ENCODE measurements at regions of chr5 and their contacts with region 1.

Region 1: DNA sequence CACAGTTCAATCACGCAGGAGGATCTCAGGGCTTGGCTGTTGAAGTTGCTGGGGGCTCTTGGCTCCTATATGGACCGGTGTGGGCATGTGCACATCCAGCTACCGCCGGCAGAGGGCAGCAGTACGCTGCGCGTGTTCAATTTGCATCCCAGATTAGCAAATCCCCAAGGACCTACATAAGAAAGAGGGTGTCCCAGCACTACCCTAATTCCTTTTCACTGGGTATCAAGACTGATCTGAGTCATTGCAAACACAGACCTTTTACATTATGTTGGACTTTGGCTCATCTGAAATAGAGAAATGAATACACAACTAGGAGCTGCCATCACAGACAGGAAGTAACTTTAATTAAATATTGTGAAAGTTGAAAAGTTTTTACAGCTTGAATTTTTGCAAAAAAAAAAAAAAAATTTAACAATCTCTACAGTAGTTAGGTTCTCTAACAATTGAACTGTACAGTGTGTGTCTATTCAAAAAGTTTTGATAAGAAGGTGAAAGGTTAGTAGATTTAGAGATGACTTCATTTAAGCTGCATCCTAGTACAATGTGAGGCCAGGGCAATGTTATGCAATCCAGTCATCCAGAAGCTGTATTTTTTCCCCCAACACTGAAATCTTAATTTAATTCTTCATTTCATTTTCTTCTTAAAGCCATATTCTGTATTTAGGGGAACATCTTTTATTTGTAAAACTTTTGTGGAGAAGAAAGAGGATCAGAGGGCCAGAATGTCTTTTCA is 404.0 kb downstream of the EBF1 start:
- DNase-seq: peak; percentile 60
- ATAC-seq: peak; percentile 95
- H3K4me3 ChIP-seq: no peak overlapping the region
- H3K27ac ChIP-seq: no peak overlapping the region
- H3K4me1 ChIP-seq: no peaks in the 10 kb centered on the region
- H3K27me3 ChIP-seq: peaks cover 2% of the 10 kb centered on the region; the same call in 1 of the 2 replicates
- CTCF ChIP-seq: peak; percentile 90
- POLR2A ChIP-seq: no peak
- RAD21 ChIP-seq: peak; percentile 89

Region 2: GRCh38 chr5:158074992-158075769 is 620.6 kb before region 1 on chr5:
- CTCF ChIA-PET with region 1: interaction called, 4 read pairs
- POLR2A ChIA-PET with region 1: no interaction called
- dilution Hi-C with region 1: no loop called
- in situ Hi-C with region 1: no loop called
- intact Hi-C with region 1: loop called (anchors 1 kb)
- DNase-seq: peak; percentile 61
- ATAC-seq: peak; percentile 98
- H3K4me3 ChIP-seq: peak overlapping the region; percentile 20; the same call in 1 of the 2 replicates
- H3K27ac ChIP-seq: no peak overlapping the region
- H3K4me1 ChIP-seq: no peaks in the 10 kb centered on the region
- H3K27me3 ChIP-seq: no peaks in the 10 kb centered on the region
- CTCF ChIP-seq: peak; percentile 75
- POLR2A ChIP-seq: no peak
- RAD21 ChIP-seq: peak; percentile 59

Region 3: GRCh38 chr5:158174918-158175851 is 520.6 kb before region 1 on chr5:
- CTCF ChIA-PET with region 1: interaction called, 4 read pairs
- POLR2A ChIA-PET with region 1: no interaction called
- dilution Hi-C with region 1: no loop called
- in situ Hi-C with region 1: no loop called
- intact Hi-C with region 1: loop called (anchors 1 kb)
- DNase-seq: peak; percentile 56
- ATAC-seq: peak; percentile 77
- H3K4me3 ChIP-seq: no peak overlapping the region
- H3K27ac ChIP-seq: no peak overlapping the region
- H3K4me1 ChIP-seq: no peaks in the 10 kb centered on the region
- H3K27me3 ChIP-seq: no peaks in the 10 kb centered on the region; the same call in none of the 2 replicates
- CTCF ChIP-seq: peak; percentile 86
- POLR2A ChIP-seq: 0 out of 2 replicates have a peak, but pooled peaks have one; percentile 28
- RAD21 ChIP-seq: peak; percentile 94

Region 4: GRCh38 chr5:159027504-159027903 is 331.7 kb after region 1 on chr5:
- CTCF ChIA-PET with region 1: no interaction called
- POLR2A ChIA-PET with region 1: no interaction called
- dilution Hi-C with region 1: no loop called
- in situ Hi-C with region 1: no loop called
- intact Hi-C with region 1: no loop called
- DNase-seq: no peak
- ATAC-seq: no peak
- H3K4me3 ChIP-seq: no peak overlapping the region
- H3K27ac ChIP-seq: no peak overlapping the region
- H3K4me1 ChIP-seq: no peaks in the 10 kb centered on the region; the same call in 1 of the 2 replicates
- H3K27me3 ChIP-seq: no peaks in the 10 kb centered on the region
- CTCF ChIP-seq: no peak
- POLR2A ChIP-seq: no peak
- RAD21 ChIP-seq: no peak

Region 5: GRCh38 chr5:159112436-159112835 is 416.7 kb after region 1 on chr5:
- CTCF ChIA-PET with region 1: interaction called, 90 read pairs
- POLR2A ChIA-PET with region 1: no interaction called
- dilution Hi-C with region 1: no loop called
- in situ Hi-C with region 1: loop called (anchors 5 kb)
- intact Hi-C with region 1: no loop called
- DNase-seq: no peak
- ATAC-seq: no peak
- H3K4me3 ChIP-seq: no peak overlapping the region
- H3K27ac ChIP-seq: no peak overlapping the region
- H3K4me1 ChIP-seq: no peaks in the 10 kb centered on the region
- H3K27me3 ChIP-seq: peaks cover 15% of the 10 kb centered on the region
- CTCF ChIP-seq: no peak
- POLR2A ChIP-seq: no peak
- RAD21 ChIP-seq: no peak